B cell (primary cell): ENCODE measurements at regions of chr16 and their contacts with region 1.

Region 1: GRCh38 chr16:578870-579405 is 9.2 kb downstream of the PIGQ start:
- DNase-seq: peak; percentile 86
- ATAC-seq: peak; percentile 94
- H3K4me3 ChIP-seq: peak overlapping the region in 1 of 5 experiments; percentile 23
- H3K4me3 Mint-ChIP-seq: peak overlapping the region; percentile 73
- H3K27ac ChIP-seq: no peak overlapping the region
- H3K27ac Mint-ChIP-seq: no peak overlapping the region
- H3K4me1 ChIP-seq: peaks cover 0 to 8% of the 10 kb centered on the region in 2 donors
- H3K4me1 Mint-ChIP-seq: peaks cover 4% of the 10 kb centered on the region
- H3K27me3 ChIP-seq: no peaks in the 10 kb centered on the region
- H3K27me3 Mint-ChIP-seq: no peaks in the 10 kb centered on the region
- CTCF ChIP-seq: peak; percentile 78

Region 2: GRCh38 chr16:508884-509736 is 69.8 kb before region 1 on chr16:
- CTCF ChIA-PET with region 1: no interaction called
- POLR2A ChIA-PET with region 1: no interaction called
- intact Hi-C with region 1: no loop called
- DNase-seq: no peak
- ATAC-seq: no peak
- H3K4me3 ChIP-seq: no peak overlapping the region
- H3K4me3 Mint-ChIP-seq: no peak overlapping the region
- H3K27ac ChIP-seq: no peak overlapping the region
- H3K27ac Mint-ChIP-seq: no peak overlapping the region
- H3K4me1 ChIP-seq: no peaks in the 10 kb centered on the region
- H3K4me1 Mint-ChIP-seq: no peaks in the 10 kb centered on the region
- H3K27me3 ChIP-seq: no peaks in the 10 kb centered on the region
- H3K27me3 Mint-ChIP-seq: no peaks in the 10 kb centered on the region
- CTCF ChIP-seq: no peak

Region 3: DNA sequence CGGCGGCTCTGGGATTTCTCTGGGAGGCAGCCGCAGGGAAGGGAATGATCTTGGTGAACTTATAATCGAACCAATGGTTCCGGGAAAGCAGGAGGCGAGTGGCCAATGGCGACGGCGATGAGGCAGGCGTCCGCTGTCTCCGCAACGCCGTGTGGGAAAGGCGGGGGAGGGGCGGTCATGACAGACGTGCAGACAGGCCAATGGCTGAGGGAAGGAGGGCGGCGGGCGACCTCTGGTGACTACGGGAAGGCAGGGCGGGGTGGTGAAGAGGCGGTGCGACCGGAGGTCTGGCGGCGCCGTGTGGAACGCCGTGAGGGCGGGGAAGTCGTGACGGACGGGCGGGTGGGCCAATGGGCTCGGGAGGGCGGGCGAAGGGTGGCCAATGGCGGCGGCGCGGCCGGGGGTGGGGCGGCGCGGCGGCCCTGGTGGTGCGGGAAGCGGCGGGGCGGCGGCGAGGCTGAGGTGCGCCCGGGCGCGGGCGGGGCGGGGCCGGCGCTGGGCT is 10.8 kb after region 1 on chr16 and contains the start of gene RAB40C:
- CTCF ChIA-PET with region 1: interaction called, 5 read pairs
- POLR2A ChIA-PET with region 1: interaction called, 7 read pairs
- intact Hi-C with region 1: loop called (anchors 1 kb)
- DNase-seq: peak; percentile 100
- ATAC-seq: peak; percentile 84
- H3K4me3 ChIP-seq: peak within 1 kb of the TSS; percentile 66 to 89 (median 78)
- H3K4me3 Mint-ChIP-seq: peak within 1 kb of the TSS; percentile 94
- H3K27ac ChIP-seq: peak within 1 kb of the TSS; percentile 85 to 88
- H3K27ac Mint-ChIP-seq: peak within 1 kb of the TSS; percentile 99
- H3K4me1 ChIP-seq: peaks cover 14 to 30% of the 10 kb centered on the region in 2 donors
- H3K4me1 Mint-ChIP-seq: peaks cover 50% of the 10 kb centered on the region
- H3K27me3 ChIP-seq: peaks cover 0 to 2% (median 0%) of the 10 kb centered on the region in 4 experiments
- H3K27me3 Mint-ChIP-seq: no peaks in the 10 kb centered on the region
- CTCF ChIP-seq: no peak
- total RNA-seq, gene RAB40C: 25.5 and 26.9 TPM in 2 replicates

Region 4: GRCh38 chr16:610513-611334 is 31.8 kb after region 1 on chr16:
- CTCF ChIA-PET with region 1: no interaction called
- POLR2A ChIA-PET with region 1: no interaction called
- intact Hi-C with region 1: loop called (anchors 2 kb)
- DNase-seq: peak; percentile 63
- ATAC-seq: peak; percentile 39
- H3K4me3 ChIP-seq: no peak overlapping the region
- H3K4me3 Mint-ChIP-seq: no peak overlapping the region
- H3K27ac ChIP-seq: no peak overlapping the region
- H3K27ac Mint-ChIP-seq: no peak overlapping the region
- H3K4me1 ChIP-seq: peaks cover 0 to 3% of the 10 kb centered on the region in 2 donors
- H3K4me1 Mint-ChIP-seq: peaks cover 17% of the 10 kb centered on the region
- H3K27me3 ChIP-seq: no peaks in the 10 kb centered on the region
- H3K27me3 Mint-ChIP-seq: no peaks in the 10 kb centered on the region
- CTCF ChIP-seq: peak; percentile 72

Region 5: DNA sequence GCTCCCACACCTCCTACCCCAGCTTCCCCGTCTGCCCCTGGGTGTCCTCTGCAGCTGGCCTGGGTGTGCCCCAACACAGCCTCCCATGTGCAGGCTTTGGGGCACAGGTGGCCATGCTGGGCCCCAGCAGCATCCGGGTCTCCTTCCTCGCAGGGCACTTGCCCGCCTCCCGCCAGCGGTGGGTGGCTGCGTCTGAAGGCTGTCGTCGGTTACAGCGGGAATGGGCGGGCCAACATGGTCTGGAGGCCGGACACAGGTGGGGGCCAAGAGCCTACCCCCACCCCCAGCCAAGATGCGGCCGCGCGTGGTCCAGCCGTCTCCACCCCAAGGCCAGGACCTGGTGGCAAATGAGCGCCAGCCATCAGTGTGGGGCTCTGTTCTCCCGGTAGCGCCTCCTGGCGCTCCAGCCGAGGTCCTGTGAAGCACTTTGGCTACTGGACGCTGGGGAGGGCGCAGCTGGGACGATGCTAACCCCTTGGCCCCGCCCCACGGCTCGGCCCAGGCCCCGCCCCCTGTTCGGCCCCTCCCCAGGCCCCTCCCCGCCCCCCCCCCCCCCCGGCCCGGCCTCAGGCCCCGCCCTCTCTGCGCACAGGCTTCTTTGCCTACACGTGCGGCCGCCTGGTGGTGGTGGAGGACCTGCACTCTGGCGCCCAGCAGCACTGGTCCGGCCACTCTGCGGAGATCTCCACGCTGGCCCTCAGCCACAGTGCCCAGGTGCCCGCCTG is 81.7 kb after region 1 on chr16:
- CTCF ChIA-PET with region 1: interaction called, 5 read pairs
- POLR2A ChIA-PET with region 1: no interaction called
- intact Hi-C with region 1: loop called (anchors 1 kb)
- DNase-seq: peak; percentile 81
- ATAC-seq: peak; percentile 90
- H3K4me3 ChIP-seq: peak overlapping the region in 4 of 5 experiments; percentile 9 to 35 (median 24)
- H3K4me3 Mint-ChIP-seq: peak overlapping the region; percentile 52
- H3K27ac ChIP-seq: peak overlapping the region in 1 of 2 donors; percentile 43
- H3K27ac Mint-ChIP-seq: peak overlapping the region; percentile 56
- H3K4me1 ChIP-seq: peaks cover 10 to 17% of the 10 kb centered on the region in 2 donors
- H3K4me1 Mint-ChIP-seq: peaks cover 10% of the 10 kb centered on the region
- H3K27me3 ChIP-seq: no peaks in the 10 kb centered on the region
- H3K27me3 Mint-ChIP-seq: no peaks in the 10 kb centered on the region
- CTCF ChIP-seq: peak; percentile 57

Region 6: GRCh38 chr16:667780-668518 is 89.0 kb after region 1 on chr16 and contains the start of gene RHOT2:
- CTCF ChIA-PET with region 1: no interaction called
- POLR2A ChIA-PET with region 1: no interaction called
- intact Hi-C with region 1: loop called (anchors 1 kb)
- DNase-seq: peak; percentile 95
- ATAC-seq: peak; percentile 99
- H3K4me3 ChIP-seq: peak within 1 kb of the TSS; percentile 23 to 84 (median 73)
- H3K4me3 Mint-ChIP-seq: peak within 1 kb of the TSS; percentile 86
- H3K27ac ChIP-seq: peak within 1 kb of the TSS; percentile 41 to 79
- H3K27ac Mint-ChIP-seq: peak within 1 kb of the TSS; percentile 92
- H3K4me1 ChIP-seq: peaks cover 15 to 25% of the 10 kb centered on the region in 2 donors
- H3K4me1 Mint-ChIP-seq: peaks cover 12% of the 10 kb centered on the region
- H3K27me3 ChIP-seq: no peaks in the 10 kb centered on the region
- H3K27me3 Mint-ChIP-seq: no peaks in the 10 kb centered on the region
- CTCF ChIP-seq: peak; percentile 79
- total RNA-seq, gene RHOT2: 207 and 215 TPM in 2 replicates